Panc1 (cell line): ENCODE measurements at regions of chr13 and their contacts with region 1.

Region 1: GRCh38 chr13:92158346-92158745 is 759.9 kb downstream of the GPC5 start:
- DNase-seq: no peak
- ATAC-seq: no peak
- H3K4me3 ChIP-seq: no peak overlapping the region
- H3K27ac ChIP-seq: no peak overlapping the region
- H3K4me1 ChIP-seq: no peaks in the 10 kb centered on the region
- H3K27me3 ChIP-seq: no peaks in the 10 kb centered on the region
- CTCF ChIP-seq: no peak

Region 2: GRCh38 chr13:92694047-92694446 is 535.7 kb after region 1 on chr13:
- CTCF ChIA-PET with region 1: no interaction called
- POLR2A ChIA-PET with region 1: interaction called, 19 read pairs
- in situ Hi-C with region 1: no loop called
- intact Hi-C with region 1: no loop called
- DNase-seq: no peak
- ATAC-seq: no peak
- H3K4me3 ChIP-seq: no peak overlapping the region
- H3K27ac ChIP-seq: no peak overlapping the region
- H3K4me1 ChIP-seq: no peaks in the 10 kb centered on the region
- H3K27me3 ChIP-seq: no peaks in the 10 kb centered on the region
- CTCF ChIP-seq: no peak